Tibial artery (tissue), 4 donors: ENCODE measurements at regions of chr6 and their contacts with region 1.

Region 1: DNA sequence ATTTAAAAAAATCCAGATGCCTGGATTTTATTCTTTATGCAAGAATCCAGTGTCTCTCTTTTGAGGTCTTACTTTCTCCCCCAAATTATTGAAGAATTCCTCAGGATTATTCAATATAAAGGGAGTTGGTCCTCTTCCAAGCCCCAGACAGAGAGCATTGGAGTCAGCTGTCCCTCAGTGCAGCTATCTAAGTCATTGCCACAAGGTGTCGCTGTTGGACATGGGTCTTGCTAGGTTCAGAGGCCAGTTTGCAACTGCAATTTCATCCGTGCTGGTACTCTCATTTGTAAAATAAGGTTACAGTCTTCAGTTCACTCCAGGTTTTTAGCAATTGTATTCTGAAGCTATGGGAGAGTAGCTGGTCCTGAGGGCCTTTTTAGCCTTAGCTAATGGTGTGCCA is 27.8 kb downstream of the CCN2 start:
- DNase-seq: no peak
- H3K4me3 ChIP-seq: no peak overlapping the region
- H3K27ac ChIP-seq: no peak overlapping the region
- H3K4me1 ChIP-seq: peaks cover 0 to 7% (median 2%) of the 10 kb centered on the region in 4 donors
- H3K27me3 ChIP-seq: no peaks in the 10 kb centered on the region
- CTCF ChIP-seq: peak; percentile 31 to 35

Region 2: GRCh38 chr6:131982740-131983259 is 59.4 kb after region 1 on chr6:
- intact Hi-C with region 1: no loop called
- DNase-seq: no peak
- H3K4me3 ChIP-seq: no peak overlapping the region
- H3K27ac ChIP-seq: peak overlapping the region in 1 of 2 donors; percentile 22
- H3K4me1 ChIP-seq: peaks cover 0 to 53% (median 16%) of the 10 kb centered on the region in 4 donors
- H3K27me3 ChIP-seq: no peaks in the 10 kb centered on the region
- CTCF ChIP-seq: no peak

Region 3: DNA sequence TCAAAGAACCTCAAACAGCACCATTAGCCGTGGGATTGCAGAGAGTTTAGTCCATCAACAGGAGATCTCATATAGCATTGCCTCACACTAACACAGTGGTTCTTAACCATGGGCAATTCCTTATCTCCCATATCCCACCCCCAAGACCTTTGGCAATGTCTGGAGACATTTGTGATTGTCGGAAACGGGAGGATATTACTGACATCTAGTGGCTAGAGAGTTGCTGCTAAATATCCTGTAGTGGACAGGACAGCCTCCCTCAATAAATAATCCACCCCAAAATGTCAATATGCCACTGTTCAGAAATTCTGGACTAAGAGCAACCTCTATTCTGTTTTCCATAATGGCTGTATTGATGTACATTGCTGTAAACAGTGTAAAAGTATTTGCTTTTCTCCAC is 237.9 kb after region 1 on chr6:
- intact Hi-C with region 1: loop called (anchors 5 kb)
- DNase-seq: no peak
- H3K4me3 ChIP-seq: no peak overlapping the region
- H3K27ac ChIP-seq: no peak overlapping the region
- H3K4me1 ChIP-seq: peaks cover 0 to 4% (median 1%) of the 10 kb centered on the region in 4 donors
- H3K27me3 ChIP-seq: no peaks in the 10 kb centered on the region
- CTCF ChIP-seq: peak; percentile 50 to 62

Region 4: DNA sequence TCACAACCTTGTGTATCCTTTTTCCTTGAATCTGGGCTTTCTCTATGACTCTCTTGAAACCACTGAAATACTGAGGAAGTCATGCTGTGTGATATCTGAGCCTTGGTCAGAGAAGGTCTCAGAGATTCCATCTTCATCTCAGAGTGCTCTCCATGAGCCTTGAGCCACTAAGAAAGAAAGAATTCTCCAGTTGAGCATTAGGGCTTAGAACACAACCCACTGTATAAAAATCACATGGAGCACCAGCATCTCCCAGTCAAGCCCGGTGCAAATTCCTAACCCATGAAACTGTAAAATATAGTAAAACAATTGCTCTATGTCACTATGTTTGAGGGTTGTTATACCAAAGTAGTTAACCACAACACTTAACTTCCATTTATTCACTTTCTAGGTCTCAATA is 296.5 kb after region 1 on chr6:
- intact Hi-C with region 1: loop called (anchors 2 kb)
- DNase-seq: no peak
- H3K4me3 ChIP-seq: no peak overlapping the region
- H3K27ac ChIP-seq: no peak overlapping the region
- H3K4me1 ChIP-seq: no peaks in the 10 kb centered on the region
- H3K27me3 ChIP-seq: no peaks in the 10 kb centered on the region
- CTCF ChIP-seq: no peak